ENCODE measurements at regions of chr12 and their contacts with region 1.

Region 1: GRCh38 chr12:93397412-93397811 is 19.7 kb downstream of the NUDT4 start:
- DNase-seq: no peak
- ATAC-seq: no peak
- H3K4me3 Mint-ChIP-seq: no peak overlapping the region
- H3K27ac Mint-ChIP-seq: no peak overlapping the region
- H3K4me1 Mint-ChIP-seq: peaks cover 4% of the 10 kb centered on the region
- H3K27me3 Mint-ChIP-seq: no peaks in the 10 kb centered on the region

Region 2: GRCh38 chr12:92784795-92785562 is 612.4 kb before region 1 on chr12:
- CTCF ChIA-PET with region 1: interaction called, 4 read pairs
- POLR2A ChIA-PET with region 1: no interaction called
- intact Hi-C with region 1: loop called in 1 of 2 experiments (anchors 5 kb)
- DNase-seq: peak; percentile 33
- ATAC-seq: peak; percentile 98
- H3K4me3 Mint-ChIP-seq: no peak overlapping the region
- H3K27ac Mint-ChIP-seq: no peak overlapping the region
- H3K4me1 Mint-ChIP-seq: peaks cover 2% of the 10 kb centered on the region
- H3K27me3 Mint-ChIP-seq: no peaks in the 10 kb centered on the region

Region 3: GRCh38 chr12:92827836-92828431 is 569.5 kb before region 1 on chr12:
- CTCF ChIA-PET with region 1: interaction called, 4 read pairs
- POLR2A ChIA-PET with region 1: no interaction called
- intact Hi-C with region 1: loop called in 1 of 2 experiments (anchors 5 kb)
- DNase-seq: peak; percentile 61
- ATAC-seq: no peak
- H3K4me3 Mint-ChIP-seq: no peak overlapping the region
- H3K27ac Mint-ChIP-seq: no peak overlapping the region
- H3K4me1 Mint-ChIP-seq: peaks cover 2% of the 10 kb centered on the region
- H3K27me3 Mint-ChIP-seq: no peaks in the 10 kb centered on the region

Region 4: DNA sequence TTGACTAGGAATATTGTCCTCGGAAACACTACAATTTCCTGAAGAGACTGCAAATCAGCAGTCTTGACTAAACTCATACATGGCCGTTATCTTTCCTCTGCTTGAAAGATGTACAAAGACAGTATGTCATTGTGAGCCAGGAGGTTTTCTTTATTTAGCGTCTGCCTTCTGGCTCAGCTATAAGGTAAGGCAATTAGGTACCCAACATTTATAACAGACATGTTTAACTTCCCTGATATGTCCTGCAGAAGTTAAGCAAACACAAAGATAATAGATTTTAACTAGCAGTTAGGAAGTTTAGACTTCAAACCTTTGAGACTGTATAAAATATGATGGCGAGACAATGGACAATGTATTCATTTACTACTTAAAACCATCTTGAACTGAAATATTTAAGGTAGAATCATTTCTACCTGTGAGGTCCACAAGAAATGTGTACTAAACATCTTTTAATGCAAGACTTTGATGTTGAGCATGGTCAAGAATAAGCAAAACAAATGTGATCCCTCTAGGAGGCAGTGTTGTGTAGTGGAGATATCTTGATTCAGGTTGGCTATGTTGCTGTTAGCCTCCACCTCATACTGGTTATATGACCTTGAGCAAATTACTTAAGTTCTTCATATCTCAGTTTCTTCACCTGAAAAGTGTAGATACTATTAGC is 372.1 kb before region 1 on chr12:
- CTCF ChIA-PET with region 1: interaction called, 6 read pairs
- POLR2A ChIA-PET with region 1: no interaction called
- intact Hi-C with region 1: loop called (anchors 1 to 2 kb)
- DNase-seq: no peak
- ATAC-seq: peak; percentile 69
- H3K4me3 Mint-ChIP-seq: no peak overlapping the region
- H3K27ac Mint-ChIP-seq: no peak overlapping the region
- H3K4me1 Mint-ChIP-seq: no peaks in the 10 kb centered on the region
- H3K27me3 Mint-ChIP-seq: no peaks in the 10 kb centered on the region